T-cell (primary cell): ENCODE measurements at regions of chr4 and their contacts with region 1.

Region 1: DNA sequence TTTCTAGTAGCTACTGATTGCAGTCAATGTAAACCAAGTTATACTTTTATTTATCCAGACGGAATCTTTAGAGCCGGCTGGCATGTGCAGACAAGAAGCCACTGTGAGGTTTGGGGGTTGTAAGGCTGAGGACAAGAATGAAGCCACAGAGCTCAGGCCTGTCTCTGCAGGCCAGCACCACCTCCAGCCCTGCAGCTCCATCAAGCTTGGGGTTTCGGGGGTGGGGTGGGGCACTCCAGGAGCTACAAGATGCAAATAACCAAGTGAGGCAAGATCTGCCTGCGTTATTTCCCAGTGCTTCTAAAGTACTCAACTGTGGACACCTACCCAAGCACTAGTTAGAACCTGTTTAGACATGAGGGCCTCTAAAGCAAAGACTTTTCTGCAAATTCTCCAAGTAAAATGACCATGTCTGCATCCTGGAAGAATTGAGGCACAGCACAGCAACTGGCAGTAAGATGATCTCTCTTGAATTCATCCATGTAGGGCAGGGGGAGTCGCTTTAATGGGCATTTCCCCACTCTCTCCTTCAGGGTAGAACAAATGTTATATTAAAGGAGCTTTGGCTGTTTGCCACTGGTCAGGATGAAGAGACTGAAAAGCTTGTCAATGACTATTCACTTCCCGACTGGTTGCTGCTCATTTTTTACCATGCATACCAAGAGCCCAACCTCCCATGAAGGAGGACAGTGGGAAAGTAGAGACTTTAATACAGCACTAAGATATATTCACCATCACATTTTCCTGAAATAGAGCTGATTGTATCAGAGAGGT is 222.5 kb downstream of the MGST2 start:
- DNase-seq: no peak
- ATAC-seq: no peak
- H3K4me3 ChIP-seq: no peak overlapping the region
- H3K4me3 Mint-ChIP-seq: no peak overlapping the region
- H3K27ac ChIP-seq: no peak overlapping the region
- H3K27ac Mint-ChIP-seq: no peak overlapping the region
- H3K4me1 ChIP-seq: no peaks in the 10 kb centered on the region
- H3K4me1 Mint-ChIP-seq: no peaks in the 10 kb centered on the region
- H3K27me3 ChIP-seq: no peaks in the 10 kb centered on the region
- H3K27me3 Mint-ChIP-seq: no peaks in the 10 kb centered on the region

Region 2: DNA sequence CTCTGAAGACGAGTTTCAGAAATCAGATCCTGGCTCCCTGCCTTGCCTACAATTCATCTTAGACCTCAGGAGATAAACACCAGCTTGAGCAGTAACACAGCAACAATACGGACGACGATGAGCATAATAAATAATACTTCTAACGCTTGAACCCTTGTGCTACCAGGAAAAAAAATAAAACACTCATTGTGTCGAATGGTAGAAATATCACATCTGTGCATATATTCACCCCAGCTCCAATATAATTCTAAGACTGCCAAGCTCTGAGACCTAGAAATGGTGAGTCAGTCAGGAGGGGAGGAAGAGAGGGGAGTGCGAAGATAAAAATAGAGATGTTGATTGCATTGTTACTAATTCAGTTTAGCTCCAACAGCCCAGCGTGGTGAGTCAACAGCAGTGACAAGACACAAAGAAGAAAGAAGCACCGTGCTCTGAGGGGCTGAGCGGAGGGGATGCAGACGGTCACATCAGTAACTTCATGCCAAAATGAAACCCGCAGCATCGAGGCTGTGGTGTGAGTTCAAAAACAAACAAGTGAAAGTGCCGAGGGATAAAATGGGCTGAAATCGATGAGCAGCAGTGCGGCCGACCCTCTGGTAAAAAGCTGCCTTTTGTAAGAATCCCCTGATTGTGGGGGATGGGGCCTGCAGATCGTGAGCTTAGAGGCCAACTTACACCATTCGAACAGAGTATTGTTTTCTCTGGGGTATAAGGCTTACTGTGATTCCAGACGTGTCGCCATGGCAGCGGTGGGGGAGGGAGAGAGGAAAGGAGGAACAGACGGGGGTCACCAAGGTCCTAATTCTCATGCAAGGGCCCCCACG is 72.2 kb before region 1 on chr4:
- CTCF ChIA-PET with region 1: no interaction called
- POLR2A ChIA-PET with region 1: no interaction called
- DNase-seq: no peak
- ATAC-seq: no peak
- H3K4me3 ChIP-seq: no peak overlapping the region
- H3K4me3 Mint-ChIP-seq: peak overlapping the region; percentile 10 to 32 (median 31)
- H3K27ac ChIP-seq: no peak overlapping the region
- H3K27ac Mint-ChIP-seq: no peak overlapping the region
- H3K4me1 ChIP-seq: no peaks in the 10 kb centered on the region
- H3K4me1 Mint-ChIP-seq: peaks cover 0 to 5% (median 2%) of the 10 kb centered on the region in 3 donors
- H3K27me3 ChIP-seq: no peaks in the 10 kb centered on the region
- H3K27me3 Mint-ChIP-seq: no peaks in the 10 kb centered on the region

Region 3: DNA sequence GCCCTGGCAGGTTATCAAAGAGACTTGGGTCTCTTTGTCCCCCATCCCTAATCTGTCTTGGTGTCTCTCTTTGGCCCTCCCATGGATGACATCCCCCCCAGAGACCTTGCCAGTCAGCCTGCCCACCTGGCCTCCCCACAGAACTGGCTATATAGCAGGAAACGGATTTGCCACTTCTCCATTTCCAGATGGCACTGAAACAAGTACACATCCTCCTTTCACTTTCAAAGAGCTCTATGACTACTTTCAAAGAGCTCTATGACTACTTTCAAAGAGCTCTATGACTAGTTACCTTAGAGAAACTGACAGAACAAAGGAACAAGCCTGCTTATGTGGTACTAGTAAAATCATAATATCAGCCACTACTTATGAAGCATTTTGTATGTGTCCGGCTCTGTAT is 90.5 kb after region 1 on chr4:
- CTCF ChIA-PET with region 1: interaction called in 1 of 2 experiments, 10 read pairs
- POLR2A ChIA-PET with region 1: no interaction called
- DNase-seq: peak in 1 of 35 experiments; percentile 10
- ATAC-seq: peak in 3 of 4 experiments; percentile 33 to 42 (median 40)
- H3K4me3 ChIP-seq: no peak overlapping the region
- H3K4me3 Mint-ChIP-seq: no peak overlapping the region
- H3K27ac ChIP-seq: no peak overlapping the region
- H3K27ac Mint-ChIP-seq: peak overlapping the region in 1 of 2 donors; percentile 23
- H3K4me1 ChIP-seq: peaks cover 3 to 22% of the 10 kb centered on the region in 2 experiments
- H3K4me1 Mint-ChIP-seq: peaks cover 12 to 18% (median 16%) of the 10 kb centered on the region in 3 donors
- H3K27me3 ChIP-seq: no peaks in the 10 kb centered on the region
- H3K27me3 Mint-ChIP-seq: no peaks in the 10 kb centered on the region

Region 4: GRCh38 chr4:140359562-140360427 is 471.6 kb after region 1 on chr4:
- CTCF ChIA-PET with region 1: no interaction called
- POLR2A ChIA-PET with region 1: no interaction called
- DNase-seq: peak; percentile 34 to 87 (median 66)
- ATAC-seq: peak; percentile 83 to 97 (median 90)
- H3K4me3 ChIP-seq: no peak overlapping the region
- H3K4me3 Mint-ChIP-seq: no peak overlapping the region
- H3K27ac ChIP-seq: no peak overlapping the region
- H3K27ac Mint-ChIP-seq: no peak overlapping the region
- H3K4me1 ChIP-seq: no peaks in the 10 kb centered on the region
- H3K4me1 Mint-ChIP-seq: peaks cover 4 to 5% (median 4%) of the 10 kb centered on the region in 3 donors
- H3K27me3 ChIP-seq: peaks cover 0 to 3% of the 10 kb centered on the region in 2 experiments
- H3K27me3 Mint-ChIP-seq: no peaks in the 10 kb centered on the region